Colonic mucosa (tissue), 4 donors: ENCODE measurements at regions of chr5 and their contacts with region 1.

Region 1: GRCh38 chr5:147558826-147559225 is 49.0 kb upstream of the DPYSL3 start:
- DNase-seq: peak; percentile 27
- H3K4me3 ChIP-seq: no peak overlapping the region
- H3K27ac ChIP-seq: no peak overlapping the region
- H3K4me1 ChIP-seq: no peaks in the 10 kb centered on the region
- H3K27me3 ChIP-seq: no peaks in the 10 kb centered on the region
- CTCF ChIP-seq: peak; percentile 16

Region 2: GRCh38 chr5:147453875-147454814 is 104.7 kb before region 1 on chr5:
- intact Hi-C with region 1: loop called (anchors 5 kb)
- DNase-seq: peak; percentile 87
- H3K4me3 ChIP-seq: peak overlapping the region; percentile 44
- H3K27ac ChIP-seq: peak overlapping the region; percentile 75
- H3K4me1 ChIP-seq: no peaks in the 10 kb centered on the region
- H3K27me3 ChIP-seq: peaks cover 21% of the 10 kb centered on the region
- CTCF ChIP-seq: peak; percentile 71

Region 3: GRCh38 chr5:147464211-147464610 is 94.6 kb before region 1 on chr5:
- intact Hi-C with region 1: loop called (anchors 5 kb)
- DNase-seq: no peak
- H3K4me3 ChIP-seq: no peak overlapping the region
- H3K27ac ChIP-seq: no peak overlapping the region
- H3K4me1 ChIP-seq: no peaks in the 10 kb centered on the region
- H3K27me3 ChIP-seq: no peaks in the 10 kb centered on the region
- CTCF ChIP-seq: no peak